B cell (primary cell): ENCODE measurements at regions of chr3 and their contacts with region 1.

Region 1: GRCh38 chr3:111616417-111617105 is 21.4 kb upstream of the ZBED2 start:
- DNase-seq: peak; percentile 49
- ATAC-seq: peak; percentile 82
- H3K4me3 ChIP-seq: no peak overlapping the region
- H3K4me3 Mint-ChIP-seq: peak overlapping the region; percentile 59
- H3K27ac ChIP-seq: peak overlapping the region; percentile 2 to 39
- H3K27ac Mint-ChIP-seq: peak overlapping the region; percentile 87
- H3K4me1 ChIP-seq: peaks cover 16 to 21% of the 10 kb centered on the region in 2 donors
- H3K4me1 Mint-ChIP-seq: peaks cover 21% of the 10 kb centered on the region
- H3K27me3 ChIP-seq: no peaks in the 10 kb centered on the region
- H3K27me3 Mint-ChIP-seq: no peaks in the 10 kb centered on the region
- CTCF ChIP-seq: peak; percentile 8

Region 2: GRCh38 chr3:111496894-111497559 is 119.5 kb before region 1 on chr3:
- CTCF ChIA-PET with region 1: no interaction called
- POLR2A ChIA-PET with region 1: no interaction called
- intact Hi-C with region 1: no loop called
- DNase-seq: no peak
- ATAC-seq: no peak
- H3K4me3 ChIP-seq: no peak overlapping the region
- H3K4me3 Mint-ChIP-seq: no peak overlapping the region
- H3K27ac ChIP-seq: no peak overlapping the region
- H3K27ac Mint-ChIP-seq: no peak overlapping the region
- H3K4me1 ChIP-seq: no peaks in the 10 kb centered on the region
- H3K4me1 Mint-ChIP-seq: no peaks in the 10 kb centered on the region
- H3K27me3 ChIP-seq: no peaks in the 10 kb centered on the region
- H3K27me3 Mint-ChIP-seq: no peaks in the 10 kb centered on the region
- CTCF ChIP-seq: no peak

Region 3: DNA sequence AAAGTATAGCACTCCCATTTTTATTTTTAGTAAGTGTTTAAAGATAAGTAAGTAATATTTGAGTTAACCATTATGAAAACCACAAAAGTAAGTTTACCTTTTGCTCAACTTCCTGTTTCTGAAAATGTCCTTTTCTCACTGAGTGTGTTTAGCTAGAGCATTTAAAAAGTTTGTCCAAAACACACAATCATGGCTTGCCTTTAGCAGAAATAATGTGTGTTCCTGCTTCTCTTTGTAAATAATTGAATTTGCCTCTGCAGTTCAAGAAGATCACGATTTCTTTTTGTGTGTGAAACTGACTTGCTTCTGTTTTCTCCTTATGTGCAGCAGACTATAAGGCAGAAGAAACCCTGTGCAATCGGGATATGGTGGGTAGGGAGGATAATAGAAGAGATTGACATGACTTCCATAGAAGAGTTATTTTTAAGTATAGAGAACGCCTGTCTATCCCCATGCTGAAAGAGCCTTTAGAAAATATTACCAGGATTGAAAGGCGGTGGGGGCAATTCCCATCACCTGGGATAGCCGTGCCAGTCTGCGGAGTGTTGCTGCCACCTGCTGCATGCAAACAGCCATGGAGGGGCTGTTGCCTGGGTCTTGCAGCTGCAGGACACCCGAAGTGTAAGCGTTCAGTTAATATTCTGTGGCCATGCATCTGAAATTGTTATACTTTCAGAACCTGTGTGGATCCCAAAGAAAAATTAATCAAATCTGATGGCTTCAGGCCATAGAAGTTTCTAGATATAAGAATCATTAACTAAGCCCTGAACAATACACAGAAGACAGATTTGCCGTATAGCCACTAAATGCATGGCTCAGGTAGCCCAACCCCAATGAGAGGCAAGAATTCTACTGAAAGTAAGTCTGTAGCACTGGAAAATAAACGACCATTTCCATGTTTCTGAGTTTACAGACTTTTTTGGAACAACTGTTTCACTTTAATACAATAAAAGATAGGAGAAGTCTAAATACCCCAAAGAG is 76.9 kb before region 1 on chr3:
- CTCF ChIA-PET with region 1: interaction called, 7 read pairs
- POLR2A ChIA-PET with region 1: no interaction called
- intact Hi-C with region 1: loop called (anchors 2 kb)
- DNase-seq: peak; percentile 77
- ATAC-seq: peak; percentile 85
- H3K4me3 ChIP-seq: peak overlapping the region; percentile 12 to 64 (median 49)
- H3K4me3 Mint-ChIP-seq: peak overlapping the region; percentile 75
- H3K27ac ChIP-seq: no peak overlapping the region
- H3K27ac Mint-ChIP-seq: peak overlapping the region; percentile 28
- H3K4me1 ChIP-seq: peaks cover 37 to 51% of the 10 kb centered on the region in 2 donors
- H3K4me1 Mint-ChIP-seq: peaks cover 62% of the 10 kb centered on the region
- H3K27me3 ChIP-seq: no peaks in the 10 kb centered on the region
- H3K27me3 Mint-ChIP-seq: no peaks in the 10 kb centered on the region
- CTCF ChIP-seq: peak; percentile 79

Region 4: GRCh38 chr3:111571907-111572460 is 44.6 kb before region 1 on chr3:
- CTCF ChIA-PET with region 1: interaction called, 71 read pairs
- POLR2A ChIA-PET with region 1: no interaction called
- intact Hi-C with region 1: no loop called
- DNase-seq: no peak
- ATAC-seq: no peak
- H3K4me3 ChIP-seq: no peak overlapping the region
- H3K4me3 Mint-ChIP-seq: no peak overlapping the region
- H3K27ac ChIP-seq: no peak overlapping the region
- H3K27ac Mint-ChIP-seq: no peak overlapping the region
- H3K4me1 ChIP-seq: no peaks in the 10 kb centered on the region
- H3K4me1 Mint-ChIP-seq: peaks cover 2% of the 10 kb centered on the region
- H3K27me3 ChIP-seq: no peaks in the 10 kb centered on the region
- H3K27me3 Mint-ChIP-seq: no peaks in the 10 kb centered on the region
- CTCF ChIP-seq: no peak

Region 5: DNA sequence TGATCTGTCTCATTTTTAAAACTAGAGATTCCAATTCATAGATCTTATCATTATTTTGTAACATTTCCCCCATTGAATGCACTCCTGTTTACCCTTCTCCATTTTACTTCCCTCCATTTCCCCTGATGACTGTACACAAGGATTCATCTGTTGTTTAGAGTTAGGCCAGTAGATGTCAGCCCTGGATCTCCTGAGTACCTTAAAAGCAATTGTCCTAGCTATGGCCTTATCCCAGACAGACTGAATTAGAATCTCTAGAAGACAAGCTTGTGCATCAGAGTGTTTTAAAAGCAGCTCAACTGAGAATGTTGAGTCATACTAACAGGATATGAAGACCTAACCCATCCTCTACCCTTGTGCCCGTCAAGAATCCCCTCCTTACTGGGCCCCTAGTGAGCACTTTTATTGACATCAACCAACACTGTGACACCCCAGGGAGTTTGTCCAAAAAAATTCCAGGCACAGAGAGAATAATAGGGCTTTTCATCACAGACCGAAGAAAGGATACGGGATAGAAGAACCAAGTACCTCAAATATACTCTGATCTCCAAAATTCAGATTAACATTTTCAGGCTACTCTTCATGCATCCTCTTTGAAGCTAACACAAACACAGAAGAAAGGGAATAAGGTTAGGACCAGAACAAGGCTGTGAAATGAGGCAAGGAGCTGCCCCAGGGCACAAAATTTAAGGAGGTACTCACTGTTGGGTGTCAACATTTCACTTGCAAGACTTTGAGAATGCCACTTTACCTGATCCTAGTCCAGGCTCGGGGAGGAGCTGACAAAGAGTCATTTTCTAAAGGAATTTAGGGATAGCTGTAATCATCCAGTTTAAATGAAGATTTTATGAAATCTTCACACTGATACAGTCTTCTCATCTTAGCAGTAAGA is 38.5 kb before region 1 on chr3:
- CTCF ChIA-PET with region 1: interaction called, 71 read pairs
- POLR2A ChIA-PET with region 1: no interaction called
- intact Hi-C with region 1: loop called (anchors 1 kb)
- DNase-seq: peak; percentile 47
- ATAC-seq: peak; percentile 86
- H3K4me3 ChIP-seq: no peak overlapping the region
- H3K4me3 Mint-ChIP-seq: no peak overlapping the region
- H3K27ac ChIP-seq: no peak overlapping the region
- H3K27ac Mint-ChIP-seq: peak overlapping the region; percentile 59
- H3K4me1 ChIP-seq: peaks cover 9 to 18% of the 10 kb centered on the region in 2 donors
- H3K4me1 Mint-ChIP-seq: peaks cover 31% of the 10 kb centered on the region
- H3K27me3 ChIP-seq: no peaks in the 10 kb centered on the region
- H3K27me3 Mint-ChIP-seq: no peaks in the 10 kb centered on the region
- CTCF ChIP-seq: peak; percentile 55

Region 6: GRCh38 chr3:111594205-111594604 is 22.4 kb before region 1 on chr3:
- CTCF ChIA-PET with region 1: interaction called, 17 read pairs
- POLR2A ChIA-PET with region 1: interaction called, 6 read pairs
- intact Hi-C with region 1: no loop called
- DNase-seq: peak; percentile 25
- ATAC-seq: peak; percentile 74
- H3K4me3 ChIP-seq: no peak overlapping the region
- H3K4me3 Mint-ChIP-seq: peak overlapping the region; percentile 56
- H3K27ac ChIP-seq: peak overlapping the region; percentile 16 to 71
- H3K27ac Mint-ChIP-seq: peak overlapping the region; percentile 84
- H3K4me1 ChIP-seq: peaks cover 27 to 47% of the 10 kb centered on the region in 2 donors
- H3K4me1 Mint-ChIP-seq: peaks cover 58% of the 10 kb centered on the region
- H3K27me3 ChIP-seq: no peaks in the 10 kb centered on the region
- H3K27me3 Mint-ChIP-seq: no peaks in the 10 kb centered on the region
- CTCF ChIP-seq: no peak

Region 7: DNA sequence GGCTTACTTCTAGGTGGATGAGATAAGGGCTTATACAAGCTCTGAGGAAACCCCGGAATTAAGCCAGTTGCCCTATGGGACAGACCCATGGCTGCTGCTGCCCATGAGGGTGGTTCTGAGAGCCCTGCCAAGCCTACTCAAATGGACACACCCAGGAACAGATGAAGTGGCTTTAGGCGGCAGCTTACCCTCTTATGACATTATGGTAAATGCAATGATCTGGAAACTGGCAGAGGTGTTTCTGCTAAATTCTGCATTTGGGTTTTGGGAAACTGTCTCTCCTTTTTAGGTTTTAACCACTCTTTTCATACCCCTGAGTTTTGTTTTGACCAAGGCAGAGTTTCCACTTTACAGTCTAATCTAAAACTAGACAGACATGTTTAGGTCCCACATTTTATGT is 12.4 kb before region 1 on chr3:
- CTCF ChIA-PET with region 1: interaction called, 21 read pairs
- POLR2A ChIA-PET with region 1: no interaction called
- intact Hi-C with region 1: no loop called
- DNase-seq: no peak
- ATAC-seq: peak; percentile 49
- H3K4me3 ChIP-seq: no peak overlapping the region
- H3K4me3 Mint-ChIP-seq: no peak overlapping the region
- H3K27ac ChIP-seq: peak overlapping the region in 1 of 2 donors; percentile 16
- H3K27ac Mint-ChIP-seq: peak overlapping the region; percentile 82
- H3K4me1 ChIP-seq: peaks cover 14 to 16% of the 10 kb centered on the region in 2 donors
- H3K4me1 Mint-ChIP-seq: peaks cover 38% of the 10 kb centered on the region
- H3K27me3 ChIP-seq: no peaks in the 10 kb centered on the region
- H3K27me3 Mint-ChIP-seq: no peaks in the 10 kb centered on the region
- CTCF ChIP-seq: no peak